RWPE1 (cell line): ENCODE measurements at regions of chr11 and their contacts with region 1.

Region 1: GRCh38 chr11:6353367-6353987 is 33.2 kb upstream of the CAVIN3 start:
- DNase-seq: peak; percentile 61
- H3K27ac ChIP-seq: no peak overlapping the region
- CTCF ChIP-seq: peak; percentile 95

Region 2: DNA sequence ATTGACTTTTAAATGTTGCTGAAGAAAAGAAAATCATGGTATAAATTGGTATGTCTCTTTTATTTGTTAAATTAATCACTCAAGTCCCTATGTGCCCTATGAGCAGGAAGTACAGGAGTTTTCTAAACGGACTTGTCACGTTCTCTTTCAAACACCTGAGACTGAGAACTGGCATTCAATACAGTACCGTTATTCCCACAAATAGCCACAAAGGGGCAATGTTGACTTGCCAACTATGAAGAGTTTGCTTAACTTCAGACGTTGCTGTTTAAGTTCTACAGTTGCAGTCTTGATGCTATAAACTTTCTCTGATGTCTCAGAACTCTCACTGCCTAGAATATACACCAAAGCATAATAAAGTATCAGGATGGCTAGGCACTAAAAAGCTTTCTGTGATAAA is 330.5 kb before region 1 on chr11:
- CTCF ChIA-PET with region 1: interaction called, 23 read pairs
- POLR2A ChIA-PET with region 1: no interaction called
- DNase-seq: peak; percentile 25
- H3K27ac ChIP-seq: no peak overlapping the region
- CTCF ChIP-seq: peak; percentile 47

Region 3: GRCh38 chr11:6297831-6298230 is 55.6 kb before region 1 on chr11:
- CTCF ChIA-PET with region 1: interaction called, 10 read pairs
- POLR2A ChIA-PET with region 1: no interaction called
- DNase-seq: peak; percentile 41
- H3K27ac ChIP-seq: no peak overlapping the region
- CTCF ChIP-seq: peak; percentile 21

Region 4: DNA sequence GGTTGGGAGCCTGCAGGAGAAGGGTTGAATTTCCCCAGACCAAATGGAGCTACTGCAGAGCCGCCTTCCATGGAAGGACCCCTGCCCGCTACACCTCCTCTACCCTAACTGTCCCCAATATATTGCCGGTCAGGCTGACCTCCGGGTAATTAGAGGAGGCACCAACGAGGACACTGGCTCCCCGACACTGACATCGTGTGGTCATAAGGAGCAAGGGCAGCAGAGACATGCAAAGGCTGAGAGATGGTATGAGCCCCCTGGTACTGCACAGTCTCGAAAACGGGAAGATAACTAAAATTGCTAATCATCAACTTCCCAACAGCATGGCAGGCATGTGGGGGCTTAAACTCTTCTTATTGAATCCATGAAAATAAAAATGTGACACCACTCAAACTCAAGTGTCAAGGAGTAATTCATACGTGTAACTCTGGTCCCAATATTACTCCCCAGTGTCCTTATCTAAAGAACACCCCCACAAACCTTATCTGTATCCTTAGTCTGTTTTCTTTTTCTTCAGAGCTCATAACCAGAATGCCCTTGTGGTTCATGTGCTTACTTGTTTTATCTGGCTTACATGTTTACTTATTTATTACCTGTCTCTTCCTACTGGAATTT is 37.6 kb before region 1 on chr11:
- CTCF ChIA-PET with region 1: interaction called, 19 read pairs
- POLR2A ChIA-PET with region 1: no interaction called
- DNase-seq: peak; percentile 73
- H3K27ac ChIP-seq: no peak overlapping the region
- CTCF ChIP-seq: peak; percentile 90